ENCODE measurements at regions of chr2 and their contacts with region 1.

Region 1: DNA sequence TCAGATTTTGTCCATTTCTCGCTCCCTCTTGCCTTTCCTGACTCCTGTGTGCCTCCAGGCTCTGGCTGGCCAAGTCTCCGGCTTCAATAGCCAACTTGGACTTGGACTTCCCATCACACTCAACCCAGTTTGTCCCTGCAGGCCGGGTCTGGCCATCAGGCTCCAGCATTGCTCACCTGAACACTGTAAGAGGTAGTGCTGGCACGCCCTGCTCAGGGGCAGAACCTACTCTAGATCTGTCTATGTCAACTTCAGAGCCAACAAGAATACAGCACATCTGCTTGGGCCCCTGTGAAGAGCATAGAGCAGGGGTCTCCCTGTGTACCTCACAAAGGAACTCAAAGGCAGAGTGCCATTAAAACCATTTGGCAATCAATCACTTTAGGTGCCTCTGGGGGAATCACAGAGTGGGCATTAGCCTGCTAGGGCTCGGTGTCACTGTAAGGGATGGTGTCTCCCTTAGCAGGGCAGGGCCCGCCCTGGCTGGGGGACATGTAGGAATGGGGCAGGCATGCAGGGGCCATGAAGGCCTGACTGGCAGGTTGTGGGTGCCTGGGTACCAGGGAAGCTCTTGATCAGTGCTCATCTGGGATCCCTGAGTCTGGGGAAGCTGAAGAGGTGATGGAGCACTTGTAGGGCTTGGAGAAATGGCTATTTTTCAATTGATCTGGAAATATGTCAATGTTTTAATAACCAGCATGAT is 325.9 kb downstream of the CLIP4 start:
- DNase-seq: no peak
- ATAC-seq: no peak
- H3K4me3 ChIP-seq: no peak overlapping the region
- H3K27ac ChIP-seq: no peak overlapping the region
- H3K4me1 ChIP-seq: no peaks in the 10 kb centered on the region
- H3K27me3 ChIP-seq: no peaks in the 10 kb centered on the region; the same call in none of the 2 replicates
- CTCF ChIP-seq: no peak

Region 2: GRCh38 chr2:29459445-29460179 is 18.5 kb after region 1 on chr2:
- CTCF ChIA-PET with region 1: no interaction called
- POLR2A ChIA-PET with region 1: interaction called, 19 read pairs
- in situ Hi-C with region 1: no loop called
- intact Hi-C with region 1: no loop called
- DNase-seq: no peak
- ATAC-seq: no peak
- H3K4me3 ChIP-seq: no peak overlapping the region
- H3K27ac ChIP-seq: no peak overlapping the region
- H3K4me1 ChIP-seq: no peaks in the 10 kb centered on the region
- H3K27me3 ChIP-seq: peaks cover 2% of the 10 kb centered on the region; the same call in 1 of the 2 replicates
- CTCF ChIP-seq: no peak

Region 3: GRCh38 chr2:29561181-29561580 is 120.1 kb after region 1 on chr2:
- CTCF ChIA-PET with region 1: no interaction called
- POLR2A ChIA-PET with region 1: no interaction called
- in situ Hi-C with region 1: no loop called
- intact Hi-C with region 1: no loop called
- DNase-seq: no peak
- ATAC-seq: no peak
- H3K4me3 ChIP-seq: no peak overlapping the region
- H3K27ac ChIP-seq: no peak overlapping the region
- H3K4me1 ChIP-seq: no peaks in the 10 kb centered on the region
- H3K27me3 ChIP-seq: 0 out of 2 replicates have a peak, but pooled peaks cover 4% of the 10 kb centered on the region
- CTCF ChIP-seq: no peak

Region 4: GRCh38 chr2:29723255-29724001 is 282.4 kb after region 1 on chr2:
- CTCF ChIA-PET with region 1: no interaction called
- POLR2A ChIA-PET with region 1: no interaction called
- in situ Hi-C with region 1: no loop called
- intact Hi-C with region 1: no loop called
- DNase-seq: no peak
- ATAC-seq: no peak
- H3K4me3 ChIP-seq: no peak overlapping the region
- H3K27ac ChIP-seq: no peak overlapping the region
- H3K4me1 ChIP-seq: no peaks in the 10 kb centered on the region
- H3K27me3 ChIP-seq: no peaks in the 10 kb centered on the region
- CTCF ChIP-seq: no peak

Measured in Panc1 (cell line).